Activated naive CD4-positive, alpha-beta T cell treated with anti-CD3 and anti-CD28 coated beads for 36 hours (primary cell): ENCODE measurements at regions of chr3 and their contacts with region 1.

Region 1: GRCh38 chr3:124078953-124079911 is 87.3 kb upstream of the ROPN1 start:
- DNase-seq: peak; percentile 41
- H3K4me3 Mint-ChIP-seq: no peak overlapping the region
- H3K27ac Mint-ChIP-seq: no peak overlapping the region
- H3K4me1 Mint-ChIP-seq: no peaks in the 10 kb centered on the region
- H3K27me3 Mint-ChIP-seq: peaks cover 9% of the 10 kb centered on the region

Region 2: GRCh38 chr3:123884203-123884831 is 194.9 kb before region 1 on chr3 and contains the start of gene MYLK:
- CTCF ChIA-PET with region 1: no interaction called
- intact Hi-C with region 1: loop called (anchors 2 kb)
- DNase-seq: peak; percentile 53
- H3K4me3 Mint-ChIP-seq: peak within 1 kb of the TSS; percentile 67
- H3K27ac Mint-ChIP-seq: no peak within 1 kb of the TSS
- H3K4me1 Mint-ChIP-seq: peaks cover 11% of the 10 kb centered on the region
- H3K27me3 Mint-ChIP-seq: peaks cover 57% of the 10 kb centered on the region
- total RNA-seq, gene MYLK: not detected

Region 3: DNA sequence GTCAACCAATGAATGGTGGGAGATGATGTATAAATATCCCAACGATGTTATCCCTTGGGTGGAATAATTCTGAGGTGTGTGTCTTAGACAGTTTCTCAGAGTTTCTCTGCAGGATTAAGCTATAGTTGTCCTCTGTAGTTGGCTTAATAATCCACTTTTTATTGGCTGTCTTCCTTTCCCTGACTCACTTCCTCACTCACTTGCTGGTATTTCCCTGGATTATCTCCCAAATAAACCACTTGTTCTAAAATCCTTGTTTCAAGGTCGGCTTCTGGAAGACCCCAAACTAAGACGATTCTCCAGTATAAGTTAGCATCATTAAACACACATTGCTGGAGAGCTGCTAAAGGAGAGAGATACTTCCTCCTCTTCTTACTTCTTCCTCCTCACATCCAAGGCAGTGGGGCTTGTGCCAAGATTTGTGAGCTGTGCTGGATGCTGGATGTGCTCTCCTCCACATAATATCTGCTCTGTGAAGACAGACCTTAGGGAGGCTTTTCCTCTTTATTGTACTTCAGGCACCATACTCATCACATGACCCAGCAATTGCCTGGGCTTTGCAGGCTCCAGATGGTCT is 64.8 kb before region 1 on chr3:
- CTCF ChIA-PET with region 1: interaction called, 3 read pairs
- intact Hi-C with region 1: loop called (anchors 1 kb)
- DNase-seq: no peak
- H3K4me3 Mint-ChIP-seq: no peak overlapping the region
- H3K27ac Mint-ChIP-seq: no peak overlapping the region
- H3K4me1 Mint-ChIP-seq: no peaks in the 10 kb centered on the region
- H3K27me3 Mint-ChIP-seq: peaks cover 32% of the 10 kb centered on the region

Region 4: DNA sequence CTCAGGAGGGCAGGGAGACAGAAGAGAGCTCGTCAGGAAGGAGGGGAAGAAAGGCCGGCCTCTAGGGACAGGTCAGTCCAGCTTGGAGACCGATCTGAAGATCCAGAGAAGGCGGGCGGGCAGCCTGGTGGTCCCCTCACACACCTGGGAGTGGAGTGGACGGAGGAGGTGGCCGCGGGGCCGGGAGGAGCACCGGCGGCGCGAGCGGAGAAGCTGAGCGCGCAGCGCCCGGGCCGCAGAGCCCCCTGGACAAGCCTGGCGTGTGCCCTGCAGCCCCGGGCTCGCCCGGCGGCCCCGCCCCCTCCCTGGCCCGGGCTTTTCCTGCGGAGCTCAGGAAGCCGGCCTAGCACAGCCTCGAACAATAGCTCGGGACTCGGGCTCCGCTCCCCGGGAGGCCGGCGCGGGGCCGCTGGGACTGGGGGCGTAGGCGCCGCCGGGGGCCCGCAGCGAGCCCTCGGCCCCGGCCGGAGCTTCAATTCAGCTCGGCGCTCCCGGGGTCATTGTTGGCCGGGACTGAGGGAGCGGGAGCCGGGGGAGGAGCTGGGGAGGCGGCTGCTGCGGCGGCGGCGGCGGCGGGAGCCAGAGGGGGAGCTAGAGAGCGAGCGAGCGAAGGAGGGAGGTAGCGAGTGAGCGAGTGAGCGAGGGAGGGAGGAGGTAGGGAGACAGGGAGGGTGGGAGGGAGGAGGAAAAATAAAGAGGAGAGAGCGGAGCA is 46.4 kb before region 1 on chr3:
- CTCF ChIA-PET with region 1: interaction called, 7 read pairs
- intact Hi-C with region 1: loop called (anchors 1 kb)
- DNase-seq: peak; percentile 79
- H3K4me3 Mint-ChIP-seq: peak overlapping the region; percentile 68
- H3K27ac Mint-ChIP-seq: no peak overlapping the region
- H3K4me1 Mint-ChIP-seq: peaks cover 11% of the 10 kb centered on the region
- H3K27me3 Mint-ChIP-seq: peaks cover 48% of the 10 kb centered on the region

Region 5: DNA sequence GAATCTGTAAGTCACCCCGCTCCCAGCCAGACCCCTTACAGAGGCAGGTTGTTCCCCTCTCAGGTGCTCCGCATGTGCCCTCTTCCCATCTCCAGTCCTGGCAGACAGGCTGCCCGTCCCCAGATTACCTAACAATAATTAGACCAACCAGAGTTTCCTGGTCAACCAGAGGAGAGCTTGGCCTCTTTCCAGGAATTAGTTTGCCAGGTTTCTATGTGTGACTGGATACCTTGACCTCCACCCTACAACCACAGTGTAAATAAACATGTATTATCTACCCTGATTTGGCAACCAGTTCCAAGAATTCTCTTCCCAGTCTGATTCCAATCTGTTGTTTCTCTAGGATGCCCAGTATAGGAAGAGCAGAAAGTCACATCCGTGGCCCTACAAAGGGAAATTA is 473.0 kb after region 1 on chr3:
- CTCF ChIA-PET with region 1: interaction called, 3 read pairs
- intact Hi-C with region 1: loop called (anchors 5 kb)
- DNase-seq: no peak
- H3K4me3 Mint-ChIP-seq: no peak overlapping the region
- H3K27ac Mint-ChIP-seq: no peak overlapping the region
- H3K4me1 Mint-ChIP-seq: peaks cover 3% of the 10 kb centered on the region
- H3K27me3 Mint-ChIP-seq: peaks cover 21% of the 10 kb centered on the region